ENCODE measurements at regions of chr19 and their contacts with region 1.

Region 1: GRCh38 chr19:44093931-44094765 is at the start of gene ZNF224:
- DNase-seq: peak; percentile 90
- H3K4me3 Mint-ChIP-seq: peak within 1 kb of the TSS; percentile 95
- H3K27ac Mint-ChIP-seq: peak within 1 kb of the TSS; percentile 88
- H3K4me1 Mint-ChIP-seq: peaks cover 14% of the 10 kb centered on the region
- H3K27me3 Mint-ChIP-seq: no peaks in the 10 kb centered on the region
- total RNA-seq, gene ZNF224: 12.8 to 14.0 TPM

Region 2: DNA sequence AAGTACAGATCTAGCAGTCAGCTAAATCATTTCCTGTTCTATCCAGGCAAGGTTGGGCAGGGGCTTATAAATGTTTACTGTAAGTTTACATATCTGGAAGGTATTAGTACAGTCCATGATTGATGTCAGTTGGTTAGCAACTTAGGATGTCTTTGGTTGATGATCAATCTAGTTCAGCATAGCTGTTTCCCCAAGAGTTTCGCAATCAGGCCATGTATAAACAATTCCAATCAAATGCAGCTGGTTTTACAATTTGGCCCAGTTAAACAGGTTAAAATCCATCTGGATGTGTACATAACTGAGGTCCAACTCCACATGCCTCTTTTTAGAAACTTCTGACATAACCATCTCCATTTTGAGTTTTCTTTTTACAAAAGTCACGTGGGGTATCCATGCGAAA is 136.3 kb before region 1 on chr19:
- CTCF ChIA-PET with region 1: no interaction called
- POLR2A ChIA-PET with region 1: no interaction called
- intact Hi-C with region 1: no loop called
- DNase-seq: no peak
- H3K4me3 Mint-ChIP-seq: no peak overlapping the region
- H3K27ac Mint-ChIP-seq: no peak overlapping the region
- H3K4me1 Mint-ChIP-seq: no peaks in the 10 kb centered on the region
- H3K27me3 Mint-ChIP-seq: no peaks in the 10 kb centered on the region

Region 3: GRCh38 chr19:44025217-44025936 is 68.8 kb before region 1 on chr19 and contains the start of gene ZNF222:
- CTCF ChIA-PET with region 1: interaction called, 3 read pairs
- POLR2A ChIA-PET with region 1: no interaction called
- intact Hi-C with region 1: loop called (anchors 1 kb)
- DNase-seq: peak; percentile 90
- H3K4me3 Mint-ChIP-seq: peak within 1 kb of the TSS; percentile 90
- H3K27ac Mint-ChIP-seq: peak within 1 kb of the TSS; percentile 60
- H3K4me1 Mint-ChIP-seq: peaks cover 18% of the 10 kb centered on the region
- H3K27me3 Mint-ChIP-seq: peaks cover 2% of the 10 kb centered on the region
- total RNA-seq, gene ZNF222: 0.88 to 0.94 TPM

Region 4: DNA sequence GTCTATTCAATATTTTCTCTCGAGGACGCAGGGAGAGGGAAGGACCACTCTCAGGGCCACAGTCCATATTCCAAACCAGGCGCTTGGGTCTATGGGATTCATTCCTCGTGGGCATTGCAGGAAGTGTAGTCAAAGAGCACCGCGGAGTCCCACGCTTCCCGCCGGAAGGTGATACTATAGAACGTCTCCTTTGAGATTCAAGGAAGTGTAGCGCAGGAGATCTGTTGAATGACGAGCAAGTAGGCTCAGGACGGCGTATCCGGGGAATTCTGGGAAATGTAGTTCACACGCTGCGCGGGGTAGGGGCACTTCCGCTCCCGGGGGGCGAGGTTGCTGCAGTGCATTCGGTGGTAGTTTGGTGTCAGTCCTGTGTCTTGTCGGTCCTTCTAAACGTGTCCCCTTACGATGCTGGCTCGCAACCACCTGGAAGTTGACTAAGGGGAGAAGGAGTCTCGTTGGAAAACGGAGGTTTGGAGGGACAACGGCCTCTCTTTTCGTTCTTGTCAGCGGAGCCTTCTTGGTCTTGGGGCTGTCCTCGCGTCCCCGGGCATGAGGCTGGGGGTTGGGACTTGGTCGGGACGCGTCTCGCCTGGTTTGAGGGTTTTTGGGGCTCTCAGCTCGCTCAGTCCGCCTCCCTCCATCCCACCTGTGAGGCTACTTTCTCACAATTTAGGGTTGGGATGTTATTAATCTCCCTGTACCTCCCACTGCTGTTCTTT is 22.2 kb before region 1 on chr19 and contains the start of gene ZNF284:
- CTCF ChIA-PET with region 1: no interaction called
- POLR2A ChIA-PET with region 1: no interaction called
- intact Hi-C with region 1: loop called (anchors 1 kb)
- DNase-seq: peak; percentile 87
- H3K4me3 Mint-ChIP-seq: peak within 1 kb of the TSS; percentile 87
- H3K27ac Mint-ChIP-seq: peak within 1 kb of the TSS; percentile 43
- H3K4me1 Mint-ChIP-seq: peaks cover 20% of the 10 kb centered on the region
- H3K27me3 Mint-ChIP-seq: no peaks in the 10 kb centered on the region
- total RNA-seq, gene ZNF284: 1.1 to 1.4 TPM

Region 5: DNA sequence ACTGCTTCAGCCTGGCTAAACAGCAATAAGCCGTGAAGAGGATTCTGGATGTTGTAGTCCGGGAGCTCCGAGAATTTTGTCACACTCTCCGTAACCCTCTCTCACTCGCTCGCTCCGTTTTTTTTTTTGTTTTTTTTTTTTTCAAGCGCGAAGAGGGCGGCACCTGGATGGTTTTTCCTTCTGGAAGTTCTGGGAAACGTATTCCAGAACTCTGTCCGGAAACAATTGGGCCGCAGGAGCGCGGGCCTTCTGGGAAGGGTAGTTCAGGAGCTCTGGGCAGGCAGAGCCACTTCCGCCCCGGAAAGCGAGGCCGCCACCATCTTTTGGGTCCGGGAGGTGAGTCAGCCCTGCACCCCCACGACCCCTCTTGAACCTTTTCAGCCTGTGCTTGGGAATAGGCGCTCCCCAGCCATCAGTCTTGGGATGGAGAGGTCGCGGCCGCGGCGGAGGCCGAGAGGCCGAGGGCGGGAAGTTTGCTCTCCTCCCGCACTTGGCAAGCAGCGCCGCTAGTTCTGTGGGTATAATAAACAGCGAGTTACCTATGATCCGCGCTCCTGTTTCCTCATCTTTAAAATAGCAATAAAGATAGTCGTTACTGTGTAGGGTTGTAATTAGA is 118.2 kb after region 1 on chr19 and contains the start of gene ZNF227:
- CTCF ChIA-PET with region 1: interaction called, 5 read pairs
- POLR2A ChIA-PET with region 1: no interaction called
- intact Hi-C with region 1: loop called (anchors 1 kb)
- DNase-seq: peak; percentile 89
- H3K4me3 Mint-ChIP-seq: peak within 1 kb of the TSS; percentile 91
- H3K27ac Mint-ChIP-seq: peak within 1 kb of the TSS; percentile 88
- H3K4me1 Mint-ChIP-seq: peaks cover 23% of the 10 kb centered on the region
- H3K27me3 Mint-ChIP-seq: no peaks in the 10 kb centered on the region
- total RNA-seq, gene ZNF227: 13.5 TPM

Region 6: DNA sequence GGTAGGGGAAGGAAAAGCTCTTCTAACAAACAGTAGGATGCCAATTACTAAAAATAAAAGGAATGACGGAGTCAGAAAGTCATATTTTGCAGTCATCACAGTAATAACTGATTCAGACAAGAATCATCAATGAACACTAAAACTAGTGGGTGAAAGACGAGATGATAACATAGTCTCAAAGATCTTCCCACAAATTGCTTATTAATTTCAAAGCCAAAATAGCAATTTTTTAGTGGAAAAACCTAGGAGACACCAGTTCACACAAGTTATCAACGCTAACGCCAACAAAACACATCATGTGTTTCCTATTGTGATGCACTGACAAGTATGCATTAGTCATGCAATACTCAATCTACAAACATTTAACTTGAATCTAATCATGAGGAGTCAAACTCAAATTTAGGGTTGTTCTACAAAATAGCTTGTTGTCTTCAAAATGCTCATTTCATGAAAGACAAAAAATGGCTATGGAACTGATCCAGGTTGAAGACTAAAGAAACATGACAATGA is 184.1 kb after region 1 on chr19:
- CTCF ChIA-PET with region 1: no interaction called
- POLR2A ChIA-PET with region 1: no interaction called
- intact Hi-C with region 1: no loop called
- DNase-seq: no peak
- H3K4me3 Mint-ChIP-seq: no peak overlapping the region
- H3K27ac Mint-ChIP-seq: no peak overlapping the region
- H3K4me1 Mint-ChIP-seq: no peaks in the 10 kb centered on the region
- H3K27me3 Mint-ChIP-seq: no peaks in the 10 kb centered on the region

Measured in activated CD4-positive, alpha-beta memory T cell treated with anti-CD3 and anti-CD28 coated beads for 36 hours (primary cell).